ENCODE measurements at regions of chr15 and their contacts with region 1.

Region 1: DNA sequence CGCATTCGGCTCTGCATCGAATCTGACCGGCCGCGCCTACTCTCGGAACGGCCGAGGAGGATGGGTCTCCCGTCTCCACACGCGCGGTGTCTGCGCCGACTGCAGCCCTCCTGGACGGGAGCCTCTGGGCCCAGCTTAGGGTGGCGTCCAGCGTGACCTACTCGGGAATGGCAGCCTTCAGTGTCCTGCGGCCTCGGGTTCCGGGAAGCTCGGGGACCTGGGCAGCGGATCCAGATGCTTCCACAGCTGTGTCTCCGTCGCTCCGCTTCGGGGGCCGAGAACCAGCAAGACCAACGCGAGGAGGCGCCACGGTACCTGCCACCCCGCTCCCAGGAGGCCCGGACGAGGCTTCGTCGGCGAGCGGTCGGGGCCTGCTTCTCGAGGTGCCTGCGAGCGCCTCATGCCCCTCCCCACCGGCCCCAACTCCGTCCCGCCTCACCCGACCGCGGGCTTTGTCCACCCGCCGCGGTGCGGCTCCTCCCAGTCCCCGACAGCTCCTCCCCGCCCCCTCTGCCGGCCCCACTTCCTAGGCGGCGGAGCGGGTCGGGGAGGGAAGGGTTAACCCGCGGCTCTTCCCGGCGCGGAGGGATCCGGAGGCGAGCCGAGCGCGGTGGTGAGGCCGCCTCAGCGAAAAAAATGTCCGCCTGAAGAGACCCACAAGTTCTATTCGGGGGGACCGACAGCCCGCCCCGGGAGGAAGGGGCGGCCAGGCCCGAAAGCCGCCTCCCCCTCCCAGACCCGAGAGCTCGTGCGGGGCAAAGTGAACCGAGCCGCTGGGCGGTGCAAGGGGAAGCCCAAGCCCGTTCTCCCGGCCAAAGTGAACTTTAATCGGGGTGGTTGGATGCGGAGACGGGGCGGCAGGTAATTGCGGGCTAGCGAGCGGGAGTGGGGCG is at the start of gene TCF12:
- DNase-seq: peak; percentile 95
- ATAC-seq: peak; percentile 96
- H3K4me3 ChIP-seq: peak within 1 kb of the TSS; percentile 97
- H3K27ac ChIP-seq: peak within 1 kb of the TSS; percentile 98
- H3K4me1 ChIP-seq: 0 out of 2 replicates have a peak, but pooled peaks cover 5% of the 10 kb centered on the region
- H3K27me3 ChIP-seq: no peaks in the 10 kb centered on the region
- CTCF ChIP-seq: peak; percentile 44
- POLR2A ChIP-seq: peak; percentile 63
- RAD21 ChIP-seq: peak; percentile 38; the same call in 1 of the 2 replicates
- total RNA-seq, gene TCF12: 123 and 160 TPM in 2 replicates

Region 2: GRCh38 chr15:56356616-56357015 is 561.7 kb before region 1 on chr15:
- CTCF ChIA-PET with region 1: no interaction called
- POLR2A ChIA-PET with region 1: no interaction called
- dilution Hi-C with region 1: no loop called
- in situ Hi-C with region 1: no loop called
- intact Hi-C with region 1: no loop called
- DNase-seq: no peak
- ATAC-seq: no peak
- H3K4me3 ChIP-seq: no peak overlapping the region
- H3K27ac ChIP-seq: no peak overlapping the region
- H3K4me1 ChIP-seq: no peaks in the 10 kb centered on the region
- H3K27me3 ChIP-seq: no peaks in the 10 kb centered on the region
- CTCF ChIP-seq: no peak
- POLR2A ChIP-seq: no peak
- RAD21 ChIP-seq: no peak

Region 3: DNA sequence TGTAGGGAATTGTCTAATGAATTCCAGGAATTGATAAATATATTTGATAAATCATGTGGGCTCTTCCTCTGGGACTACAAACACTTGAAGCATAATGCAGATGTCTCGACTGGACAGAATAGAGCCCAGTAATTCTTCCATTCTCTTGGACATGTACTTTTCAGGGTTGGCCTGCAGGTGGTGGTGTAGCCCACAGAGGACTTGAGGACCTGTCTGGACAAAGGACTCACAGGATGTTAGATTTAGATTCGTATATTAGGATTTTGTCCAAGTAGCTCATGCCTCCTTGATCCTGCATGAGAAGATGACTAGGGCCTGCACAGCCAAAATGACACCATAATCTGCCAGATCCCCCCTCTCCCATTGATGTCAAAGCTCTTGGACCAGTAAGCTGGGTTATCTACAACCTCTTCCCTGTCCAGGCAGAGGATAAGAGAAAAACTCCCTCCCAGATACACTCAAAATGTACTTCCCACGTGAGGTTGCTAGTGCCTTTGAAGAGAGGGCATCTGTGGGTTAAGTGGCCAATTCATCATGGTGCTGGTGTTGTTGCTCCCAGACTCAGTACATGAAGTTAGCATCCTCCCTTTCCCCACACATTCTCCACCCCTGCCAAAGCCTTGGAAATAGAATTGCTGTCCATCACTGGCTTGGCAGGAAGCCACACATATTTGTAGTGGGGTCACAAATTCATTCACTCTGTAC is 96.4 kb before region 1 on chr15:
- CTCF ChIA-PET with region 1: no interaction called
- POLR2A ChIA-PET with region 1: no interaction called
- dilution Hi-C with region 1: no loop called
- in situ Hi-C with region 1: no loop called
- intact Hi-C with region 1: loop called (anchors 1 kb)
- DNase-seq: peak; percentile 77
- ATAC-seq: peak; percentile 95
- H3K4me3 ChIP-seq: no peak overlapping the region
- H3K27ac ChIP-seq: no peak overlapping the region
- H3K4me1 ChIP-seq: peaks cover 6% of the 10 kb centered on the region
- H3K27me3 ChIP-seq: no peaks in the 10 kb centered on the region
- CTCF ChIP-seq: peak; percentile 79
- POLR2A ChIP-seq: no peak
- RAD21 ChIP-seq: peak; percentile 85

Region 4: GRCh38 chr15:57138349-57138788 is 220.1 kb after region 1 on chr15:
- CTCF ChIA-PET with region 1: interaction called, 3 read pairs
- POLR2A ChIA-PET with region 1: no interaction called
- dilution Hi-C with region 1: no loop called
- in situ Hi-C with region 1: no loop called
- intact Hi-C with region 1: loop called (anchors 2 kb)
- DNase-seq: peak; percentile 82
- ATAC-seq: peak; percentile 85
- H3K4me3 ChIP-seq: no peak overlapping the region
- H3K27ac ChIP-seq: no peak overlapping the region
- H3K4me1 ChIP-seq: peaks cover 3% of the 10 kb centered on the region; the same call in 1 of the 2 replicates
- H3K27me3 ChIP-seq: no peaks in the 10 kb centered on the region
- CTCF ChIP-seq: peak; percentile 72
- POLR2A ChIP-seq: no peak
- RAD21 ChIP-seq: peak; percentile 70

Region 5: DNA sequence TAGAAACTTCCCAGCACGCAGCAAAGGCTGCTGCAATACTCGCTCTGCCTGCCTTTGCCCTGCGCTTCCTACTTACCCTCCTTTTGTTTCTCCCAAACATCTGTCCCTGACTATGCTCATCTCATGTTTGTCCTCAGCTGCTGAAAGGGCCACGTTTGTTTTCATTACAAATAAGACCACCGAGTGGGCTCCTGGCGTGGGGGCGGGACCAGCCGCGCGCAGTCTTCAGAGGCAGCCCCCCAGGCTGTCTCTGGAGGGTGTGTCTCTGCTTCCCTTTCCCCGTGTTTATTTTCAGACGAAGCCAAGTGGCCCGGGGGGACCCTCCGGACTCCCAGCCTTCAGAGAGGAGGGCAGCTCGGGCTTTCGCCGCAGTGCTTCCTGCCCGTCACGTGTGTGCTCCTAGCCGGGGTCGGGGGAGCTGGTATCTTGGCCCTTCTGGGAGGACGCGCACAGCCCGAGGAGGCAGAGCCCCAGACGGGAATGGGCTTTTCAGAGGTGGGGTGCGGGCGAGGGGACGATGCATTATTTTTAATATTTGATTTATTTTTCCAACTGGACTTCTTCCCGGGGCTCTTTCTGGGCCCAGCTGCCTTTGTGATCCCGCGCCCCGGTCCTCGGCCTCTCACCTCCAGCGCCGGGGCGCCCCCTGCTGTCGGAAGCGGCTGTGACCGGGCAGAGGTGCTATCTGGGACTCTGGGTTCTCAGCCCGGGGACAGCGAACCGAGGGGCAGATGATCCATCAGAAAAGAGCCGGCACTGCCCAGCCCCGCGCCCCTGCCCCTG is 388.1 kb after region 1 on chr15:
- CTCF ChIA-PET with region 1: interaction called, 3 read pairs
- POLR2A ChIA-PET with region 1: no interaction called
- dilution Hi-C with region 1: no loop called
- in situ Hi-C with region 1: no loop called
- intact Hi-C with region 1: loop called (anchors 10 kb)
- DNase-seq: peak; percentile 28
- ATAC-seq: peak; percentile 92
- H3K4me3 ChIP-seq: peak overlapping the region; percentile 23; the same call in 1 of the 2 replicates
- H3K27ac ChIP-seq: peak overlapping the region; percentile 19
- H3K4me1 ChIP-seq: peaks cover 16% of the 10 kb centered on the region; the same call in 1 of the 2 replicates
- H3K27me3 ChIP-seq: no peaks in the 10 kb centered on the region
- CTCF ChIP-seq: peak; percentile 79
- POLR2A ChIP-seq: no peak
- RAD21 ChIP-seq: peak; percentile 76

Measured in IMR-90 (cell line).